Dendritic cell treated with granulocyte-macrophage colony-stimulating factor and Interleukin-4, amounts not matched to agents 40 ng/mL and 50 ng/mL, for 4 days (primary cell): ENCODE measurements at regions of chr15 and their contacts with region 1.

Region 1: GRCh38 chr15:53611145-53611920 is 148.1 kb downstream of the WDR72 start:
- H3K4me3 Mint-ChIP-seq: no peak overlapping the region
- H3K27ac Mint-ChIP-seq: no peak overlapping the region
- H3K4me1 Mint-ChIP-seq: no peaks in the 10 kb centered on the region
- H3K27me3 Mint-ChIP-seq: no peaks in the 10 kb centered on the region

Region 2: GRCh38 chr15:53589526-53590050 is 21.7 kb before region 1 on chr15:
- intact Hi-C with region 1: loop called (anchors 1 kb)
- H3K4me3 Mint-ChIP-seq: no peak overlapping the region
- H3K27ac Mint-ChIP-seq: no peak overlapping the region
- H3K4me1 Mint-ChIP-seq: no peaks in the 10 kb centered on the region
- H3K27me3 Mint-ChIP-seq: no peaks in the 10 kb centered on the region

Region 3: DNA sequence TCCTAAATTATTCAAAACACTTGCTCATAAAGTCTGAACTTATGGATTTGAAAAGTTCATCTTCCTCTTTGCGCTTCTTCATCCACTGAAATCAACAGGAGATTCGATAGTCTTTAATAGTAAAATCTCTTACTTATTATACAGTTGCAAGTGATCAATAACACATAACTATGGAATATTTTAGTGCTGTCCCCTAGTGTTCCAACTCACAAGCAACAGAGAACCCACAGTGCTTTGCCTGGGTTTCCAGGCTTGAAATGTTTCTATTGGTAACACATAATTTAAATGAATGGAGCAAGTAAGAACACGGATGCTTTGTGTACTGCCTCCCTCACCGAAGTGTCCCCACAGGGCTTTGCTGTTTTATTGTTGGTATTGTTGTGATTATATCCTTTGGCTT is 54.6 kb after region 1 on chr15:
- intact Hi-C with region 1: no loop called
- H3K4me3 Mint-ChIP-seq: no peak overlapping the region
- H3K27ac Mint-ChIP-seq: no peak overlapping the region
- H3K4me1 Mint-ChIP-seq: no peaks in the 10 kb centered on the region
- H3K27me3 Mint-ChIP-seq: no peaks in the 10 kb centered on the region

Region 4: GRCh38 chr15:53721334-53722087 is 110.2 kb after region 1 on chr15:
- intact Hi-C with region 1: no loop called
- H3K4me3 Mint-ChIP-seq: no peak overlapping the region
- H3K27ac Mint-ChIP-seq: no peak overlapping the region
- H3K4me1 Mint-ChIP-seq: no peaks in the 10 kb centered on the region
- H3K27me3 Mint-ChIP-seq: no peaks in the 10 kb centered on the region